ENCODE measurements at regions of chr18 and their contacts with region 1.

Region 1: DNA sequence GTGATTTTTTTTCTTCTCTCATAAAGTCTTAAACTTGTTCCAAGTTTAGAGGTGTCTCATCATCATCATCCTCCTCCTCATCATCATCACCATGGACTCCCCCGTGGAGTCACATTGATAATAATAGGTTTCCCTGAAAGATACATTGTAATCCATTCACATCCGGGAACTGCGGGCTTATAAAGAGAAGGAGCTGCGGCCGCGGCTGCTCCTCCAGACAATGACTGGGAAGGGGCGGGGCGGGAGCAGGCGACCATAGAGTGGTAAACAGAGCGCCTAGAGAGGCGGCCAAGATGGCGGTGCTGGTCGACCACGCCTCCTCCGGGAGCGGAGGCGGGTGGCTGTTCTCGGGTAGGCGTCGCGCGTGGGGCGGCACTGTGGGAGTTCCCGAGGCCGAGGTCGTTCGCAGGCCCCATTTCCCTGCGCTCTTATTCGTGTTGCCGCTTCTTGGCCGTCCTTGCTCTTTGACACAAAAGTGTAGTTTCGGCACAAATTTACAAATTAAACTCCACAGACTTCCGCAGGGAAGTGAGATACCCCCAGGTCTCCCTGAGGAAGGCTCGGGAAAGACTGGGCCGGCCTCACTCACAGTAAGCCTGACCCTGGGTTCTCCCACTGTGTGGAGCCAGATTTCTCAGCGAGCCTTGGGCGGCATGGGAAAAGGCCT is 1.8 kb upstream of the TCF4 start:
- DNase-seq: peak; percentile 97 to 98
- ATAC-seq: peak; percentile 95 to 99 (median 97)
- H3K4me3 ChIP-seq: peak overlapping the region; percentile 49 to 78 (median 73)
- H3K27ac ChIP-seq: peak overlapping the region; percentile 69 to 95 (median 87)
- H3K4me1 ChIP-seq: peaks cover 0 to 29% (median 12%) of the 10 kb centered on the region in 9 donors
- H3K27me3 ChIP-seq: no peaks in the 10 kb centered on the region
- CTCF ChIP-seq: peak in 2 of 9 donors; percentile 15 to 43

Region 2: DNA sequence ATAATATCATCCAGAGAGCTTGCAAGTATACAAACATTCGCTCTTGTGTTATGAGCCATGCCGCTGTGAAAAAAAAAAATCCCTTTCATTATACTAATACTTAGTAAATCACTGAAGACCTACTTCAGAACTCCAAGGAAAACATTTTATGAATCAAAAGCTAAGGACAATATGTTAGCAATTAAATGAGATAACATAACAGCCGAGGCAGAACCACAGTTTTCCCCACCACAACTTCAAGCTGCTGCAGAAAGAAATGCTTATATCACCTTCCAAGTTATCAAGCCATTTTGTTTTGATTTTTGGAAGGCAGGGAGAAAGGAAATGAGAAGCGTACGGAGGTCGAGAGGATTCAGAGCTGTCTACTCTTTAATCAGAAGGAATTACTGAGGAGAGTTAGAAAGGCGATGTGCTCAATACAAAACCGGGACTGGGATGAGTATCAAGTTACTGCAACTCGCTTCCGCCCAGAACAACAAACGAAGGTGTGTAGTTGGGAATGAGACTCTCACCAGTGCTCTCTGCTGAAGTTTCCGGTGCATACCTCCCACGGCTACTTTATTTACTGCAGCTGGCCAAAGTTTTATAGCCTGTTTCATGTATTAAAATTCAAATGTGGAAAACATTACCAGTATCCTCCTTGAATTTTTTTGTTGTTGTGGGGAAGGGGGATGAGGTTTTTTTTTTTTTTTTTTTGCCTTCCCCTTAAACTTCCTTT is 338.3 kb before region 1 on chr18:
- intact Hi-C with region 1: loop called in 2 of 10 experiments (anchors 10 kb)
- DNase-seq: no peak
- ATAC-seq: peak in 6 of 8 donors; percentile 63 to 81 (median 74)
- H3K4me3 ChIP-seq: peak overlapping the region in 1 of 10 donors; percentile 4
- H3K27ac ChIP-seq: peak overlapping the region; percentile 22 to 89 (median 66)
- H3K4me1 ChIP-seq: peaks cover 3 to 79% (median 56%) of the 10 kb centered on the region in 9 donors
- H3K27me3 ChIP-seq: no peaks in the 10 kb centered on the region
- CTCF ChIP-seq: no peak

Region 3: GRCh38 chr18:55343396-55344073 is 246.2 kb before region 1 on chr18:
- intact Hi-C with region 1: loop called in 4 of 10 experiments (anchors 5 to 10 kb)
- DNase-seq: no peak
- ATAC-seq: peak in 5 of 8 donors; percentile 46 to 67 (median 57)
- H3K4me3 ChIP-seq: no peak overlapping the region
- H3K27ac ChIP-seq: peak overlapping the region in 1 of 10 donors; percentile 1
- H3K4me1 ChIP-seq: peaks cover 2 to 66% (median 24%) of the 10 kb centered on the region in 9 donors
- H3K27me3 ChIP-seq: no peaks in the 10 kb centered on the region
- CTCF ChIP-seq: peak; percentile 24 to 73 (median 61)

Region 4: DNA sequence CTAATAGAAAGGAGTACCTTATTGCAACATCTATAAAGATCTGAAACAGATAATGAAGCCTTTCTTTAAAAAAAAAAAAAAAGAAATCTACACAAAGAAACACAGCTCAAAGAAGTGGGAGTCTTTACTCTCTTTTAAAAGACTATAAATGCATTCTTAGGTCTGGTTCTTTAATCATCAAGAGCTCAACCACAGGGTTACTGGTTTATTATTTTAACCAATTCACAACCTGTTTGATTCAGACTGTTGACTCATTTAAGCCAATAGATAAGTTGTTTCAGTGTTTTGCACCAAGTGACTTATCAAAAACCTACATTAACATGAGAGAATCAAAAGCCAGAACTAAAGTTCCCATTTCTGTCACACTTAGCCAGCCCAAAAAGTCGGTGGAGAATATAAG is 94.9 kb before region 1 on chr18:
- intact Hi-C with region 1: no loop called
- DNase-seq: no peak
- ATAC-seq: no peak
- H3K4me3 ChIP-seq: no peak overlapping the region
- H3K27ac ChIP-seq: no peak overlapping the region
- H3K4me1 ChIP-seq: peaks cover under 1 to 54% (median 16%) of the 10 kb centered on the region in 9 donors
- H3K27me3 ChIP-seq: no peaks in the 10 kb centered on the region
- CTCF ChIP-seq: no peak

Region 5: GRCh38 chr18:55509631-55510324 is 80.0 kb before region 1 on chr18:
- intact Hi-C with region 1: loop called in 5 of 10 experiments (anchors 2 to 10 kb)
- DNase-seq: peak in 1 of 2 donors; percentile 76
- ATAC-seq: peak in 6 of 8 donors; percentile 25 to 79 (median 59)
- H3K4me3 ChIP-seq: peak overlapping the region in 8 of 10 donors; percentile 15 to 44 (median 38)
- H3K27ac ChIP-seq: peak overlapping the region; percentile 69 to 95 (median 88)
- H3K4me1 ChIP-seq: peaks cover 0 to 73% (median 46%) of the 10 kb centered on the region in 9 donors
- H3K27me3 ChIP-seq: no peaks in the 10 kb centered on the region
- CTCF ChIP-seq: no peak

Region 6: DNA sequence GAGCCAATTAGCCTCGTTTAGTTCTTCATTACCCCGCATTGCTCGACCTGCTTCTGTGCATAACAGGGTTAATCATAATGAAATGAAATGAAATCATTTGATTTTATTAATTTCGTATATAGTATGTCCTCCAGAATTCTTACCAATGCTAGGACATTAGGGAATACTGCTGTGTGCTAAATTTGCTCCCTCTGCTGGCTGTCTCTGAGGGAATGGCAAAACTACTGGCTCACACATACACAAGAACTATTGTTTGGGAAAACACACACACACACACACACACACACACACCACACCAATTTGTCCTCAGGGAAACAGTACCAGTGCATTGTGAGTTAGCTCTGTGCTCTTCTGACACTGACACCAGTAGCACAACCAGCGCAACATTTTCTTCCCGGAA is 271.5 kb after region 1 on chr18:
- intact Hi-C with region 1: loop called in 1 of 10 experiments (anchors 10 kb)
- DNase-seq: no peak
- ATAC-seq: peak in 2 of 8 donors; percentile 33 to 51
- H3K4me3 ChIP-seq: no peak overlapping the region
- H3K27ac ChIP-seq: no peak overlapping the region
- H3K4me1 ChIP-seq: peaks cover 0 to 30% (median 14%) of the 10 kb centered on the region in 9 donors
- H3K27me3 ChIP-seq: no peaks in the 10 kb centered on the region
- CTCF ChIP-seq: peak in 7 of 9 donors; percentile 38 to 58 (median 45)

Region 7: GRCh38 chr18:56823986-56824565 is 1234.3 kb after region 1 on chr18:
- intact Hi-C with region 1: no loop called
- DNase-seq: no peak
- ATAC-seq: no peak
- H3K4me3 ChIP-seq: no peak overlapping the region
- H3K27ac ChIP-seq: no peak overlapping the region
- H3K4me1 ChIP-seq: peaks cover 0 to 4% (median 0%) of the 10 kb centered on the region in 9 donors
- H3K27me3 ChIP-seq: no peaks in the 10 kb centered on the region
- CTCF ChIP-seq: no peak